A673 (cell line): ENCODE measurements at regions of chr9 and their contacts with region 1.

Region 1: GRCh38 chr9:11646831-11647230 is 1034.0 kb upstream of the PTPRD start:
- DNase-seq: no peak
- H3K4me3 ChIP-seq: no peak overlapping the region
- H3K27ac ChIP-seq: no peak overlapping the region
- H3K4me1 ChIP-seq: no peaks in the 10 kb centered on the region
- H3K27me3 ChIP-seq: no peaks in the 10 kb centered on the region
- CTCF ChIP-seq: no peak

Region 2: GRCh38 chr9:11779971-11780370 is 133.1 kb after region 1 on chr9:
- CTCF ChIA-PET with region 1: no interaction called
- POLR2A ChIA-PET with region 1: no interaction called
- intact Hi-C with region 1: no loop called
- DNase-seq: no peak
- H3K4me3 ChIP-seq: no peak overlapping the region
- H3K27ac ChIP-seq: no peak overlapping the region
- H3K4me1 ChIP-seq: no peaks in the 10 kb centered on the region
- H3K27me3 ChIP-seq: no peaks in the 10 kb centered on the region
- CTCF ChIP-seq: no peak

Region 3: GRCh38 chr9:12185856-12186255 is 539.0 kb after region 1 on chr9:
- CTCF ChIA-PET with region 1: no interaction called
- POLR2A ChIA-PET with region 1: interaction called, 18 read pairs
- intact Hi-C with region 1: no loop called
- DNase-seq: no peak
- H3K4me3 ChIP-seq: no peak overlapping the region
- H3K27ac ChIP-seq: no peak overlapping the region
- H3K4me1 ChIP-seq: no peaks in the 10 kb centered on the region
- H3K27me3 ChIP-seq: no peaks in the 10 kb centered on the region
- CTCF ChIP-seq: no peak